Ovary (tissue), 10 donors: ENCODE measurements at regions of chr17 and their contacts with region 1.

Region 1: GRCh38 chr17:46940621-46941404 is 17.9 kb downstream of the GOSR2 start:
- DNase-seq: peak; percentile 59 to 78 (median 69)
- H3K4me3 ChIP-seq: no peak overlapping the region
- H3K27ac ChIP-seq: no peak overlapping the region
- H3K4me1 ChIP-seq: peaks cover 11% of the 10 kb centered on the region
- H3K27me3 ChIP-seq: no peaks in the 10 kb centered on the region
- CTCF ChIP-seq: peak in 2 of 3 donors; percentile 47 to 48
- EP300 ChIP-seq: no peak
- POLR2A ChIP-seq: no peak

Region 2: DNA sequence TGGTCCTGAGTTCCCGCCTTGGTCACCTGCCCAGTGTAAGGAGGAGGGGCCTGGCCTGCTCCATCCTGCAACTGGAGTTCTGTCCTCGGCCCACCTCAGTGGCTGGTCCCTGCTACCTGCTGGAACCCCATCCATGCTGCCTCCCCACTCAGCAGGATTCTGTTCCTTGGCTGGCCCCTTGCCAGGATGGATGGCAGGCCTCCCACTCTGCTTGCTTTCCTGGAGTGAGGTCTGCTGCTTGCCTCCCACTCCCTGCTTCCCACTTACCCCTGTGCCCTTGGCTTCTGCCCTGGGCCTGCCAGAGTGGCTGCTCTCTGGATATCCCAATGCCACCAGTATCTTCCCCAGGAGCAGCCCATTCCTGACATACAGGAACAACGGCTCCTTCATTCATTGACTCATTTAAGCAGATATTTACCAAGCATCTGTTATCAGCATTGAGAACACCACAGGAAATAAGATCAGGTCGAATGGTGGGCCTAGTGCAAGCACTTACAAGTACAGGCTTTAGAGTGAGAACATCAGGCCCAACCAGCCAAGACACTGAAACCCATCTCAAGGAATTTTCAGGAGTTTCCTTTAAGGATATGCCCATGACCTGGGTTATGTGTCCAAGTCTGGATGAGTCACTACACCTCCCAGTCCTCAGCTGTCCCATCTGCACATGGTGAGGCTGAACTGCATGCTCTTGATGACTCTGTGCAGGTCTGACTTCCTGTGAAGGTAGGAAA is 55.2 kb after region 1 on chr17:
- intact Hi-C with region 1: loop called in 1 of 4 experiments (anchors 10 kb)
- DNase-seq: no peak
- H3K4me3 ChIP-seq: no peak overlapping the region
- H3K27ac ChIP-seq: no peak overlapping the region
- H3K4me1 ChIP-seq: no peaks in the 10 kb centered on the region
- H3K27me3 ChIP-seq: no peaks in the 10 kb centered on the region
- CTCF ChIP-seq: no peak
- EP300 ChIP-seq: no peak
- POLR2A ChIP-seq: no peak

Region 3: GRCh38 chr17:47135233-47135632 is 194.4 kb after region 1 on chr17:
- intact Hi-C with region 1: no loop called
- DNase-seq: no peak
- H3K4me3 ChIP-seq: no peak overlapping the region
- H3K27ac ChIP-seq: no peak overlapping the region
- H3K4me1 ChIP-seq: no peaks in the 10 kb centered on the region
- H3K27me3 ChIP-seq: no peaks in the 10 kb centered on the region
- CTCF ChIP-seq: no peak
- EP300 ChIP-seq: no peak
- POLR2A ChIP-seq: no peak